CD4-positive, alpha-beta memory T cell (primary cell): ENCODE measurements at regions of chr16 and their contacts with region 1.

Region 1: GRCh38 chr16:1610276-1611017 is 1.4 kb downstream of the IFT140 start:
- DNase-seq: peak; percentile 90 to 93 (median 91)
- H3K4me3 ChIP-seq: peak overlapping the region in 1 of 2 donors; percentile 71
- H3K4me3 Mint-ChIP-seq: peak overlapping the region; percentile 68 to 88 (median 76)
- H3K27ac ChIP-seq: peak overlapping the region; percentile 64
- H3K27ac Mint-ChIP-seq: peak overlapping the region; percentile 64 to 98 (median 85)
- H3K4me1 ChIP-seq: peaks cover 40% of the 10 kb centered on the region
- H3K4me1 Mint-ChIP-seq: peaks cover 21 to 40% (median 23%) of the 10 kb centered on the region in 4 donors
- H3K27me3 ChIP-seq: no peaks in the 10 kb centered on the region
- H3K27me3 Mint-ChIP-seq: peaks cover 2 to 3% of the 10 kb centered on the region in 2 donors

Region 2: GRCh38 chr16:1308977-1309885 is 301.2 kb before region 1 on chr16 and contains the start of gene UBE2I:
- CTCF ChIA-PET with region 1: no interaction called
- POLR2A ChIA-PET with region 1: no interaction called
- intact Hi-C with region 1: loop called (anchors 5 kb)
- DNase-seq: peak; percentile 96 to 100 (median 98)
- H3K4me3 ChIP-seq: peak within 1 kb of the TSS; percentile 85 to 97
- H3K4me3 Mint-ChIP-seq: peak within 1 kb of the TSS; percentile 89 to 100 (median 98)
- H3K27ac ChIP-seq: peak within 1 kb of the TSS; percentile 100
- H3K27ac Mint-ChIP-seq: peak within 1 kb of the TSS; percentile 99 to 100 (median 99)
- H3K4me1 ChIP-seq: peaks cover 39% of the 10 kb centered on the region
- H3K4me1 Mint-ChIP-seq: peaks cover 16 to 47% (median 35%) of the 10 kb centered on the region in 4 donors
- H3K27me3 ChIP-seq: no peaks in the 10 kb centered on the region
- H3K27me3 Mint-ChIP-seq: no peaks in the 10 kb centered on the region
- total RNA-seq, gene UBE2I: 170 to 177 TPM

Region 3: DNA sequence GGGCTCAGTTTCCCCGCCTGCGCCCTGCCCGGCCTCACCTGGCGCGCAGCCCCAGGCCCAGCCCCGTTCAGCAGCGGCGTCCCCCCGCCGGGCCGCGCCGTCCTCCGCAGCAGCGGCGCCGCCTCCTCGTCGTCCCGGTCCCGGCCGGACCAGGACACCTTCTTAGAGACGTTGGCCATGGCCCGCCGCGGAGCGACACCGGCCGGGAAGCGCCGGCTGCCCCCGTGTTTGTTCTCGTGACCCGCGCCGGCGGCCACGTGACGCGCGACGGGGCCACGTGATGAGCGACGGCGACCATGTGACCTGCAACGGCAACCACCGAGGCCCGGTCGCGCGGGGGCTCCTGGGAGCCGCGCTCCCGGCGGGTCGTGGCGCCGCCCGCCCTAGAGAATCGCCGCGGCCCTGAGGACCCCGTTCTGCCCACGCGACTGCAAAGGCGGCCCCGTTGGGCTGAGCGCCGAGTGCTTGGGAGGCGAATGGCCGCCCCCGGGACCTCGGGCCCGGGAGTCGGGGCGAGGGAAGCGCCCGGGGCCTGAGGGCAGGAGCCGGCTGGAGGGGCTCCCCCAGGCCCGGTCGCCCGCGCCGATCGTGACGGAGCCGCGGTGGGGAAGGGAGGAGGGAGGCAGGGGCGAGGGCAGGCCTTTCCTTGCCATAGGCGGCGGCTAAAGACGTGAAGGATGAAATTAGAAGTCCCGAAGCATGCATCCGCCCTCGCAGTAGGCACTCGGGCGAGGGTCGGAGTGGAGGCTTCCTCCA is 135.5 kb before region 1 on chr16 and contains the start of gene CLCN7:
- CTCF ChIA-PET with region 1: no interaction called
- POLR2A ChIA-PET with region 1: interaction called, 3 read pairs
- intact Hi-C with region 1: loop called (anchors 2 kb)
- DNase-seq: peak; percentile 83 to 87 (median 85)
- H3K4me3 ChIP-seq: peak within 1 kb of the TSS; percentile 49 to 74
- H3K4me3 Mint-ChIP-seq: peak within 1 kb of the TSS; percentile 80 to 91 (median 84)
- H3K27ac ChIP-seq: peak within 1 kb of the TSS; percentile 91
- H3K27ac Mint-ChIP-seq: peak within 1 kb of the TSS; percentile 85 to 93 (median 91)
- H3K4me1 ChIP-seq: peaks cover 25% of the 10 kb centered on the region
- H3K4me1 Mint-ChIP-seq: peaks cover 8 to 46% (median 30%) of the 10 kb centered on the region in 4 donors
- H3K27me3 ChIP-seq: no peaks in the 10 kb centered on the region
- H3K27me3 Mint-ChIP-seq: peaks cover 0 to 3% of the 10 kb centered on the region in 2 donors
- total RNA-seq, gene CLCN7: 105 to 111 TPM

Region 4: GRCh38 chr16:1533443-1533951 is 77.0 kb before region 1 on chr16 and contains the start of gene TMEM204:
- CTCF ChIA-PET with region 1: interaction called, 4 read pairs
- POLR2A ChIA-PET with region 1: interaction called, 13 read pairs
- intact Hi-C with region 1: loop called (anchors 5 kb)
- DNase-seq: peak; percentile 42 to 62 (median 58)
- H3K4me3 ChIP-seq: peak within 1 kb of the TSS; percentile 82 to 96
- H3K4me3 Mint-ChIP-seq: peak within 1 kb of the TSS; percentile 94 to 100 (median 98)
- H3K27ac ChIP-seq: peak within 1 kb of the TSS; percentile 73
- H3K27ac Mint-ChIP-seq: peak within 1 kb of the TSS; percentile 65 to 96 (median 93)
- H3K4me1 ChIP-seq: peaks cover 42% of the 10 kb centered on the region
- H3K4me1 Mint-ChIP-seq: peaks cover 24 to 53% (median 38%) of the 10 kb centered on the region in 4 donors
- H3K27me3 ChIP-seq: no peaks in the 10 kb centered on the region
- H3K27me3 Mint-ChIP-seq: no peaks in the 10 kb centered on the region
- total RNA-seq, gene TMEM204: 124 to 125 TPM

Region 5: DNA sequence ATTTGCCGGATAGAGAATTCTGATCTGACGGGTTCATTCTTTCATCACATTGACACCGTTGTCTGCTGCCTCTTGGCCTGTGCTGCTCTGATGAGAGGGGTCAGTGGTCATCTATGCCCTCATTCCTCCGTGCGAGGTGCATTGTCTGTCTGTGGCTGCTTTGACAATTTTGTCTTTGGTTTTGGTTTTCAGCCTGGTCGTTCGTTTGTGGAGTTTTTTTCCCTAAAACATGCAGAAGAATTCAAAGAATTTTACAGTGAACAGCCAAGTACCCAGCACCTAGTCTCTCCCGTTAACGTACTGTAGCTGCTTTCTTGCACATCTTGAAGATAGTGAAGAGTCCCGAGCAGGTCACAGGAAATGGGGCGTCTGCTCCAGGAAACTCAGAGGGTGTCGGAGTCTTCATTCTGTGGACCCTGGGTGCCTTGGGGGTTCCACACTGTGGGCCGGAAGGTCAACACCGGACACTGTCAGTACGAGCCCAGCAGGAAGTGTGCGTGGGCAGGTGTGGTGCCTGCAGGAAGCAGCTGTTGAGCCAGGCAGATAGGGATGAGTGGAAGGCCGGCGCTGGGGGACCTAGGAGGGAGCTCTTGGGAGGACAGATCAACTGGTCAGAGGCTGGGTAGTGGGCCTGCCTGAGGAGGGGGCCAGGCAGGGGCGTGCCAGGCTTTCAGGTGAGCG is 30.0 kb after region 1 on chr16:
- CTCF ChIA-PET with region 1: no interaction called
- POLR2A ChIA-PET with region 1: no interaction called
- intact Hi-C with region 1: no loop called
- DNase-seq: no peak
- H3K4me3 ChIP-seq: no peak overlapping the region
- H3K4me3 Mint-ChIP-seq: peak overlapping the region in 1 of 8 donors; percentile 10
- H3K27ac ChIP-seq: no peak overlapping the region
- H3K27ac Mint-ChIP-seq: no peak overlapping the region
- H3K4me1 ChIP-seq: no peaks in the 10 kb centered on the region
- H3K4me1 Mint-ChIP-seq: peaks cover 2 to 18% (median 8%) of the 10 kb centered on the region in 4 donors
- H3K27me3 ChIP-seq: no peaks in the 10 kb centered on the region
- H3K27me3 Mint-ChIP-seq: no peaks in the 10 kb centered on the region

Region 6: DNA sequence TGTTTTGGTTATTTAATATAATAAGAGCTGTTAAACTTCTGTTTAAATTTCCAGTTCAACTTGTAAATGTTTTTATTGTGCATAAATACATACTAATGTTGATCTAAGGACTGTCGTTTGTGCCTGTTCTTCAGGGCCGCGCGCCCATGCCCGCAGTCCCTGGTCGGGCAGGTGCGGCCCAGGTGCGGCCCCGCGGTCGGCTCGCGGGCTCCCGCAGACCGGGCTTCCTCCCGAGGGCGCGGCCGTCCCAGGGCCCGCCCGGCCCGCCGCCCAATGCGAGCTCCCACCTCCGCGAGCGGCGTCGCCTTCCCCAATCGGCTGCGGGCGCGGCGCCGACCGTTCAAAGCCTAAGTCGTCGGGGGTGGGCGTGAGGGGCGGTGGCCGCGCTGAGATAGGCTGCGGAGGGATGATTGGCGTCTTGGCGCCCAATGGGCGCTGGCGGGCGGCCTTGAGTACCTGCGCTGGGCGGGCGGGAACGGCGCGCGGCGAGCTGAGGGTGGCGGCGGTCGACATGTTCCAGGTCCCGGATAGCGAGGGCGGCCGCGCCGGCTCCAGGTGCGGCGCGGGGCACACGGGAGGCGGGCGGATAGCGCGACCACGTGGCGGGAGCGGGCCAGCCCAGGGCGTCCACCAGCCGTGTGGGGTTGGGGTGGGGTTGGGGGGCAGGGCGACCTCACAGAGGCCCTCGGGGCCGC is 67.5 kb after region 1 on chr16 and contains the start of gene JPT2:
- CTCF ChIA-PET with region 1: no interaction called
- POLR2A ChIA-PET with region 1: interaction called, 14 read pairs
- intact Hi-C with region 1: loop called (anchors 1 kb)
- DNase-seq: peak; percentile 93 to 95 (median 95)
- H3K4me3 ChIP-seq: peak within 1 kb of the TSS; percentile 46 to 73
- H3K4me3 Mint-ChIP-seq: peak within 1 kb of the TSS; percentile 86 to 94 (median 90)
- H3K27ac ChIP-seq: peak within 1 kb of the TSS; percentile 70
- H3K27ac Mint-ChIP-seq: peak within 1 kb of the TSS; percentile 77 to 95 (median 86)
- H3K4me1 ChIP-seq: peaks cover 28% of the 10 kb centered on the region
- H3K4me1 Mint-ChIP-seq: peaks cover 13 to 49% (median 29%) of the 10 kb centered on the region in 4 donors
- H3K27me3 ChIP-seq: no peaks in the 10 kb centered on the region
- H3K27me3 Mint-ChIP-seq: no peaks in the 10 kb centered on the region
- total RNA-seq, gene JPT2: 38.1 to 43.1 TPM

Region 7: DNA sequence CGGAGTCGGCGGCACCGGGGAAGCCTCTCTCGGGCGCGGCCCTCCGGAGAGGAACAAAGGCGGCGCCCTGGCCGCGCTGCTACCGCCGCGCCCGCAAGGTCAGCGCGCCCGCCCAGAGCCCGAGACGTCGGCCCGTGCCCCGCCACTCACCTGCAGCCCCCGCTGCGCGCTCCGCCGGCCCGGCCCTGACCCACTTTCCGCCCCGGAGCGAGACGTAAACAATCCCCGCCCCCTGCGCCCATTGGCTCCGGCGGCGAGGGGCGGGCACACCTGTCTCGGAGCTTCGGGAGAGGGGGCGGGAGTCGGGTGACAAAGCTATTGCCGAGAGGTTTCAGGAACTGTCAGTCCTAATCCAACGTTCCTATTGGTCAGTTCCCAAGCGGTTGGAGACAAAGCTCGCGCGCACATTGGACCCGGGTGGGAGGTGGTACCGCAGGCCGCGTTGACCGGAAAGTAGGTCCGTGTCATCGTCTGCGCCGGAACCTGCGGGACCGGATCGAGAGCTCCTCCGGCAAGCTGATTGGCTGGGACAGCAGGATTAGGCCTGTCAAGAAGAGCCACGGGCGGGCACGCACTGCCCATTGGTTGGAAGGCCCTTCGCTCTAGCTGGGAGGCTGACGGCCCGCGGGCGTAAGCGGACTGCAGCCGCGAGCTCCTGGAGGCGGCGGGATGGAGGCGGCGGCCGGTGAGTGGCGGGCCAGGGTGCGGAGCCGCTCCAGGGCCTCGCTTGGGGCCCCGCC is 172.1 kb after region 1 on chr16 and contains the starts of genes NUBP2 and SPSB3:
- CTCF ChIA-PET with region 1: no interaction called
- POLR2A ChIA-PET with region 1: interaction called, 7 read pairs
- intact Hi-C with region 1: loop called (anchors 2 kb)
- DNase-seq: peak; percentile 97 to 99 (median 99)
- H3K4me3 ChIP-seq: peak within 1 kb of the TSS; percentile 69 to 88
- H3K4me3 Mint-ChIP-seq: peak within 1 kb of the TSS; percentile 91 to 96 (median 94)
- H3K27ac ChIP-seq: peak within 1 kb of the TSS; percentile 79
- H3K27ac Mint-ChIP-seq: peak within 1 kb of the TSS; percentile 92 to 97 (median 94)
- H3K4me1 ChIP-seq: peaks cover 43% of the 10 kb centered on the region
- H3K4me1 Mint-ChIP-seq: peaks cover 13 to 46% (median 30%) of the 10 kb centered on the region in 4 donors
- H3K27me3 ChIP-seq: no peaks in the 10 kb centered on the region
- H3K27me3 Mint-ChIP-seq: no peaks in the 10 kb centered on the region
- total RNA-seq, gene NUBP2: 55.9 to 59.4 TPM
- total RNA-seq, gene SPSB3: 133 to 144 TPM

Region 8: DNA sequence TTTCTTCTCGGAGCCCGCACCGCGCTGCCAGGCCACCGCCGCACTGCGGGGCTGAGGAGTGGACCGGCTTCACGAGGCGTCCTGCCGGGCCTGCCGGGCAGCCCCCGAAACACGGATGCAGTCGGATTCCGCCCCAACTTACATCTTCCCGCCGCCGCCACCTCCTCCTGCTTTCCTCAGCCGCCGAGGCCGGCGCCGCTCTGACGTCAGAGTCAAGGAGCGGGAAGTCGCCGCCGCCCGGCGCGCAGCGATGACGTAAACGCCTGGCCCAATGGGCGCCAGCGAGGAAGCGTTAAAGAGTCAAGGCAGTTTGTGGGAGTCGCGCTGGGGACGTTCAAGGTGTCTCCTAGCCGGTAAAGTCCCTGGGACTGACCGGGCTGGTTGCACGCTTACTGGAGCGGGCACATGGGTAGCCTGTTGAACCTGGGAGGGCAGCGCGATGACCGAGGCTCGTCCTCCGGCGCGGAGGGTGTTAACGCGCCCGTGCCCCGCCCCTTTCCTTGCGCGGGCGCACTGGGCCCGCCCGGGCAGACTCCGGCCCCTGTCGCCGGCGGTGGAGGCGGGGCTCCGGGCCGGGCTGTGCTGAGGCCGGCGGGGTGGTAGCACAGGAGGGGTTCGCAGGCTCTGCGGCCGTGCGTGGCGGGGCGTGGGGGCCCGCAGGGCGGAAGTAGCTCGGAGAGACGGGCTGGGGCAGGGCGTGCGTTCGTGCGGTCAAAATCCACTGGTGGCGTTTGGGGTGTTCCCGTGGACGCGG is 657.6 kb after region 1 on chr16 and contains the start of gene RNPS1:
- CTCF ChIA-PET with region 1: no interaction called
- POLR2A ChIA-PET with region 1: no interaction called
- intact Hi-C with region 1: loop called (anchors 5 kb)
- DNase-seq: peak; percentile 95 to 98 (median 95)
- H3K4me3 ChIP-seq: peak within 1 kb of the TSS; percentile 69 to 99
- H3K4me3 Mint-ChIP-seq: peak within 1 kb of the TSS; percentile 94 to 98 (median 96)
- H3K27ac ChIP-seq: peak within 1 kb of the TSS; percentile 88
- H3K27ac Mint-ChIP-seq: peak within 1 kb of the TSS; percentile 98 to 99 (median 98)
- H3K4me1 ChIP-seq: peaks cover 35% of the 10 kb centered on the region
- H3K4me1 Mint-ChIP-seq: peaks cover 25 to 54% (median 35%) of the 10 kb centered on the region in 4 donors
- H3K27me3 ChIP-seq: no peaks in the 10 kb centered on the region
- H3K27me3 Mint-ChIP-seq: peaks cover 0 to 3% of the 10 kb centered on the region in 2 donors
- total RNA-seq, gene RNPS1: 151 to 152 TPM